Ovary (tissue), 10 donors: ENCODE measurements at regions of chr7 and their contacts with region 1.

Region 1: GRCh38 chr7:24911213-24911603 is 68.8 kb downstream of the OSBPL3 start:
- DNase-seq: no peak
- H3K4me3 ChIP-seq: no peak overlapping the region
- H3K27ac ChIP-seq: no peak overlapping the region
- H3K4me1 ChIP-seq: peaks cover 7% of the 10 kb centered on the region
- H3K27me3 ChIP-seq: no peaks in the 10 kb centered on the region
- CTCF ChIP-seq: no peak
- EP300 ChIP-seq: no peak
- POLR2A ChIP-seq: no peak

Region 2: DNA sequence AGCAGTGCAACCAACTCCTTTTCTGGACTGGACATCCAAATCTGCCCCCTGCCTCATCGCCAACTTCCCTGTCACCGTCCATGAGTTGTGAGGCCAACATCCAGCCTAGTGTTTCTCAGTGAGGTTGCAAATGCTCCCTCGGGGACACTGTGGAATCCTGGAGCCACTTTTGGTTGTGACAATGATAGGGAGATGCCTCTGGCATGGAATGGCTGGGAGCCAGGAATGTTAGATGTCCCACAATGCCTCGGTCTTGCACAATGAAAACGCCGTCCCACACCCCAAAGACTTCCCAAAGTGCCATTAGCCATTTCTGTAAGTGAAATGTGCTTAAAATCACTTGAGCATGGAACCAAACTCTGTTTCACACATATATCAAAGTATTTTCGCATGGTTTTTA is 36.4 kb before region 1 on chr7:
- intact Hi-C with region 1: loop called in 1 of 4 experiments (anchors 1 kb)
- DNase-seq: no peak
- H3K4me3 ChIP-seq: no peak overlapping the region
- H3K27ac ChIP-seq: no peak overlapping the region
- H3K4me1 ChIP-seq: no peaks in the 10 kb centered on the region
- H3K27me3 ChIP-seq: no peaks in the 10 kb centered on the region
- CTCF ChIP-seq: no peak
- EP300 ChIP-seq: no peak
- POLR2A ChIP-seq: no peak

Region 3: GRCh38 chr7:25014756-25015155 is 103.5 kb after region 1 on chr7:
- intact Hi-C with region 1: no loop called
- DNase-seq: peak in 1 of 5 donors; percentile 27
- H3K4me3 ChIP-seq: no peak overlapping the region
- H3K27ac ChIP-seq: no peak overlapping the region
- H3K4me1 ChIP-seq: no peaks in the 10 kb centered on the region
- H3K27me3 ChIP-seq: no peaks in the 10 kb centered on the region
- CTCF ChIP-seq: no peak
- EP300 ChIP-seq: no peak
- POLR2A ChIP-seq: no peak

Region 4: DNA sequence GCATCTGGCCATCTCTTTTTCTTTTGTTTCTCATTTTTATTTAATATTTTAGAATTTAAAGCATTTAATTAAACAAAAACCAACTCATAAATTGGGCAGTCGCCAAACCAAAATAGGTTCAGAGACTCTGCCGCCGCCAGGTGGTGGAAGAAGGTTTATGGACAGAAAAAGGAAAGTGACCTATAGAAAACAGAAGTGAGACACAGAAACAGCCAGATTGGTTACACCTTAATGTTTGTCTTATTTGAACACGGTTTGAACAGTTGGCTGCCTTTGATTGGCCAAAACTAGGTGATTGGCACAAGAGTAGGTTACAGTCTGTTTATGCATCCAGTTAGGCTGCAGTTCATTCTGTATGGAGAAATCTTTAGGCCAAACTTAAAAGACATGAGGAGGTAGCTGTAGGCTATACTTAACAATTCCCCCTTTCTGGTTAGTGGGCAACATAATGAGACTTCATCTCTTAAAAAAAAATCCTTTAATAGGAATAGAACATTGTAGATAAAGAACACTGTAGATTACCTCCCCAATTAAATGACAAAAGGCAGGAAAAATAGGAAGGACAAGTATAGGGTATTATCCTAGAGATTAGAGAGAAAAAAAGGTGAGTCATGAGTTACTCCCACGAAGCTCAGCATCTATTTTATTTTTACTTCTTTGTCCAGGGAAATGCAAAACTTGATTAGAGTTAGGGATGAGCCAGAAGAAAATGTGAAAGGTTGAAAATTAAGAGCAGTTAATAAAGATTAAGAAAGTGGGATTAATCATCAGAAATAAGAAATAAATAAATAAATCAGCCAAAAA is 237.8 kb after region 1 on chr7:
- intact Hi-C with region 1: no loop called
- DNase-seq: no peak
- H3K4me3 ChIP-seq: no peak overlapping the region
- H3K27ac ChIP-seq: no peak overlapping the region
- H3K4me1 ChIP-seq: no peaks in the 10 kb centered on the region
- H3K27me3 ChIP-seq: no peaks in the 10 kb centered on the region
- CTCF ChIP-seq: no peak
- EP300 ChIP-seq: no peak
- POLR2A ChIP-seq: no peak